ENCODE measurements at regions of chr2 and their contacts with region 1.

Region 1: DNA sequence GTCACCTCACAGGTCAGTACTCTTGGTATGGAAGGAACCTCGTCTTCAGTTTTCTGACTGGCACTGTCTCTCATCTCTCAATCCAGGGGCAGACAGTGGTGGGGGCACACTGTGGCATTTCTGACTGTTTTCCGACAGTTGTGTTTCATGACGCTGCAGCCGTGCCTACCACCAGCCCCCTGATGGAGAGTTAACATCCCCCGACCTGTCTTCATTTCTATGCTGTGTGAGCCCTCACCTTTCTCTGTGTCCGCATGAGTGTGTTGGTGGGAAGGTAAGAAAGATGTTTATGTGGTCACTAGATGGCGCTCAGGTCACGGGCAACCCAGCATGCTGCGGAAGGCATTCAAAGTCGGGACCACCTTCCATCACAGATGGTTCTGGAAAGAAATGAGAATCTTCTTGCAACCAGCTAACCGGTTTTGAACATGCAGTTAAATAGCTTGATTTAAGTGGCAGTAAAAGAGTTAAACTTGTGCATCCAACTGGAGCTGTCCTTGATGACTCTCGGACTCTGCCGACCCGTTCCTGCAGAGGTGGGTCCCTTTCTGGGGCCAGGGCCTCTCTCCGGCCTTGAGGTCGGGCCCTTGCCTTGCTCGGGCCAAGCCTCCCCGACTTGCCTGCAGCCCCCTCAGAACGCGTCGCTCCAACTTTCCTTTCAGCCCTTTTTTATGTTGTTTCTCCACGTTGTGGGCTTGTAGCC is 92.4 kb downstream of the DYSF start:
- DNase-seq: peak; percentile 80
- H3K4me3 ChIP-seq: peak overlapping the region; percentile 25
- H3K27ac ChIP-seq: no peak overlapping the region
- H3K4me1 ChIP-seq: peaks cover 4% of the 10 kb centered on the region
- H3K27me3 ChIP-seq: no peaks in the 10 kb centered on the region
- CTCF ChIP-seq: peak; percentile 84

Region 2: GRCh38 chr2:70901227-70902066 is 644.3 kb before region 1 on chr2:
- CTCF ChIA-PET with region 1: no interaction called
- POLR2A ChIA-PET with region 1: no interaction called
- intact Hi-C with region 1: no loop called
- DNase-seq: peak; percentile 62
- H3K4me3 ChIP-seq: peak overlapping the region; percentile 77
- H3K27ac ChIP-seq: peak overlapping the region; percentile 90
- H3K4me1 ChIP-seq: peaks cover 17% of the 10 kb centered on the region
- H3K27me3 ChIP-seq: no peaks in the 10 kb centered on the region
- CTCF ChIP-seq: no peak

Region 3: GRCh38 chr2:72579591-72580180 is 1034.0 kb after region 1 on chr2:
- CTCF ChIA-PET with region 1: no interaction called
- POLR2A ChIA-PET with region 1: no interaction called
- intact Hi-C with region 1: loop called (anchors 5 kb)
- DNase-seq: peak; percentile 81
- H3K4me3 ChIP-seq: no peak overlapping the region
- H3K27ac ChIP-seq: peak overlapping the region; percentile 10
- H3K4me1 ChIP-seq: peaks cover 48% of the 10 kb centered on the region
- H3K27me3 ChIP-seq: no peaks in the 10 kb centered on the region
- CTCF ChIP-seq: peak; percentile 73

Region 4: GRCh38 chr2:72669121-72669520 is 1123.4 kb after region 1 on chr2:
- CTCF ChIA-PET with region 1: no interaction called
- POLR2A ChIA-PET with region 1: no interaction called
- intact Hi-C with region 1: no loop called
- DNase-seq: no peak
- H3K4me3 ChIP-seq: no peak overlapping the region
- H3K27ac ChIP-seq: no peak overlapping the region
- H3K4me1 ChIP-seq: no peaks in the 10 kb centered on the region
- H3K27me3 ChIP-seq: no peaks in the 10 kb centered on the region
- CTCF ChIP-seq: no peak

Measured in A673 (cell line).